ENCODE measurements at regions of chr5 and their contacts with region 1.

Region 1: DNA sequence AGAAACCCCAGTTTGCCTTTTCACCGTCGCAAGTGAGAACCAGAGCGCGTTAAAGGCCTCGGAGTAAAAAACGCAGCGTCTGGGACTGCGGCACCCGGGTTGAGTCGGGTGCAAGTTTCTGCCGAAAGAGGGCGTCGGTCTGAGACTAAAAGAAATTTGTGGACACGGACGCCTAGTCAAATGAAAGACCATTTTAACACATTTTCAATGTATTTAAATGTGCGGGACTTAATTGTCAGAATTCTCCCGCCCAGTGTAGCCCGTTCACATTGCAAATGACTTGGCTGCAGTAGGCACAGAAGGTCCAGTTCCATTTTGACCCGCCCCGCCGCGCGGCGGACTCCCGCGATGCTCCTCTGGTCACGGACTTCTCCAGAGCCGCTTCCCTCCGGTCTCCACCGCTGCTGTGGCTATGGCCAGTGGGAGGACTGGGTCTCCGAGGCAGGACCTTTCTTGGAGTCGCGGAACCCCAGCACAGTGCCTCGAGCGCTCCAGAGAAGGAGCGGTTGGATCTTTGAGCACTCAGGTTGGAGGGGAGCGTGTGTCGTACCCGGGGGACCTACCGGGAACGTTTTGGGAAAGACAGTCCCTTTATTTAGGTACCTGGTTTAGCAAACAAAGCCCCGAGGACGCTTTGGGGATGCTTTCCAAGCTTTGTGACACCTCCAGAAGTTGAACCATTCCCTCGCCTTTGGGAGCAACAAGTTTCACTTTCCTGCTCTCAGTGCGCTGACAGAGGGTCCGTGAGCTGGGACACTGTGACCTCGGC is 1.2 kb upstream of the NPR3 start:
- DNase-seq: peak; percentile 69
- H3K4me3 ChIP-seq: peak overlapping the region; percentile 41 to 72 (median 53)
- H3K27ac ChIP-seq: peak overlapping the region; percentile 64 to 79 (median 74)
- H3K4me1 ChIP-seq: peaks cover 0 to 44% (median 18%) of the 10 kb centered on the region in 4 donors
- H3K27me3 ChIP-seq: peaks cover 70% of the 10 kb centered on the region
- CTCF ChIP-seq: peak; percentile 57 to 63 (median 58)
- EP300 ChIP-seq: no peak
- POLR2A ChIP-seq: no peak

Region 2: DNA sequence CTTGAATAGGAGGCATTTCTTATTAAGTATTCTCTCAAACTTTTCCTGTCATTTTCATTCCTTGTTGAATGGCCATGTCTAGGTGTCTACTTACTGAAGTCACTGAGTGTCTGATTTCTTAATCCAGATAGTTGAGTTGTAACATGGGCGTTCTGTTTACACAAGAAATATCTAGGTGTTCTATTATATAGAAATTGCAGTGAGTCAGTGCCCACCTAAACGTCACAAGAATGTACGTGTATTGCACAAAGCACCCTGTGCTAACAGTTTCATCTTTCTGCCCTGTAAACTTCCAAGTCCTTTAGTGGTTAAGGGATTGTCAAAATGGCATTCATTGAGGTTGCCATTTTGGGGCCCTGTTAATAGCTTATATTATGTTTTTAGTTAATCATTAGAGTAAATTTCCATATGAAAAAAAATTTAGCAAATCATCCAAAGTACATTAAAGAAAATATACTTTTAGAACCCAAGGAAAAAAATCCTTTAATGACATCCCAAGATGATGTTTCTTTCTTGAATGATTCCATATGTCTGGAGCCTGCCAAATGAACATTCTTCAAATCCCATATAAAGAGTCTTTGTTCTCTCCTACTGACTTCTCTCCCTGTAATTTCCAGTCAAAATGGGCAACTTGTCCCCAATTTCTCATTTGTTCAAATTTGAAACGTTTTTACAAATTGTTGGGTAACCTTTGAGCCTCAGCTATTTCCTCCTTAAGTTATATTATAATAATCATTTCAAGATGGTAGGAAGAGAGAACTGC is 650.0 kb before region 1 on chr5:
- in situ Hi-C with region 1: no loop called
- intact Hi-C with region 1: no loop called
- DNase-seq: no peak
- H3K4me3 ChIP-seq: no peak overlapping the region
- H3K27ac ChIP-seq: no peak overlapping the region
- H3K4me1 ChIP-seq: no peaks in the 10 kb centered on the region
- H3K27me3 ChIP-seq: no peaks in the 10 kb centered on the region
- CTCF ChIP-seq: no peak
- EP300 ChIP-seq: no peak
- POLR2A ChIP-seq: no peak

Region 3: DNA sequence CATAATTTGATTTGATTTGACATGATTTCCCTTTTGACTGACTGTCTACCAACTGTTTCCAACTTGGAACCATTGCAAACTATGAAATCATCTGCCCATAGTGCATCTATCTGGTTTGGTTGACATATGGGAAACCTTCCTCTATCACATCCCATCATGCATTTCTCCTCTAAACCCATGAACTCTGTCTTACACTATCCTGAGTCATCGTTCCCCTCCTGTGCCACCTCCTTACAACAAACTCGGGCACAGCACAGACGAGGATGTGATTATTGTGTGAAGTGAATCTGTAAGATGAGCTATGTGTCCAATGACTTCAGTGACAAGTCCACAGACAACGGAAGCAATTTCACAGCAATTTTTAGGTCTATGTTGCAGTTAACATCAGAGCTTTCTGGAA is 127.2 kb after region 1 on chr5:
- in situ Hi-C with region 1: no loop called
- intact Hi-C with region 1: no loop called
- DNase-seq: no peak
- H3K4me3 ChIP-seq: no peak overlapping the region
- H3K27ac ChIP-seq: no peak overlapping the region
- H3K4me1 ChIP-seq: no peaks in the 10 kb centered on the region
- H3K27me3 ChIP-seq: no peaks in the 10 kb centered on the region
- CTCF ChIP-seq: no peak
- EP300 ChIP-seq: no peak
- POLR2A ChIP-seq: no peak

Region 4: DNA sequence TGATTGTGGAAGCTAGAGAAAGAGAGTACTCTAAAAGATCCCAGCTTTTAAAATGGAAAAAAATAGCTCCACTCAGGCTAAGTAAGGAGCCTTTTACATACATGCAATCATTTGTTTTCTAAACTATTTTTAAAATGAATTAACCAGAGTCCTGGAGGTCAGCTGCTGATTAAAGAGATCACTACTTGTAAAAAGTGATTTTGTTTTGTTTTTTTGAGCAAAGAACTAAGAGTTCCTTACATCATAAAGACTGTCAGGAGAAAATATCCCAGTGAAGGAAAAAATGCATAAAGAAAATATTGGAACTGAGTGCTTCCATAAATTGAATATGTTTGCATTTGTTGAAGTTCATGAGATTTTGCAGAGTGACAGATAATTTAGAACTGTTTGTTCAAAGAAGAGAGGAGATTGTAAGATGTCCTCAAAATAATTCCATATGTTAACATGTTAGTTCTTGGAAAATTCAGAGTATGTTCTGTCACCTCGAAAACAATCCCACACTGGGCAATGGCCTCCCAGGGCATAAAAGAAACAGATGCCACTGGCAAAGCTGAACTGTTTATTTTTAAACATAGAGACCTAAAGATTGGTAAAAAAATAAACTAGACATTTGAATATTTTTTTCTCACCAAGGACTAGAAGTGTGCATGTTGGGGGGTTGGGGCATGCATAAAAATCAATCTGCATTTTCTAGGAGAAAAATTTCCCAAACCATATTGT is 265.9 kb after region 1 on chr5:
- in situ Hi-C with region 1: no loop called
- intact Hi-C with region 1: no loop called
- DNase-seq: no peak
- H3K4me3 ChIP-seq: no peak overlapping the region
- H3K27ac ChIP-seq: peak overlapping the region in 2 of 4 donors; percentile 1 to 41
- H3K4me1 ChIP-seq: no peaks in the 10 kb centered on the region
- H3K27me3 ChIP-seq: no peaks in the 10 kb centered on the region
- CTCF ChIP-seq: no peak
- EP300 ChIP-seq: no peak
- POLR2A ChIP-seq: no peak

Region 5: GRCh38 chr5:33281431-33281843 is 571.5 kb after region 1 on chr5:
- in situ Hi-C with region 1: no loop called
- intact Hi-C with region 1: loop called (anchors 10 kb)
- DNase-seq: no peak
- H3K4me3 ChIP-seq: no peak overlapping the region
- H3K27ac ChIP-seq: no peak overlapping the region
- H3K4me1 ChIP-seq: peaks cover 0 to 11% (median 0%) of the 10 kb centered on the region in 4 donors
- H3K27me3 ChIP-seq: no peaks in the 10 kb centered on the region
- CTCF ChIP-seq: no peak
- EP300 ChIP-seq: no peak
- POLR2A ChIP-seq: no peak

Region 6: DNA sequence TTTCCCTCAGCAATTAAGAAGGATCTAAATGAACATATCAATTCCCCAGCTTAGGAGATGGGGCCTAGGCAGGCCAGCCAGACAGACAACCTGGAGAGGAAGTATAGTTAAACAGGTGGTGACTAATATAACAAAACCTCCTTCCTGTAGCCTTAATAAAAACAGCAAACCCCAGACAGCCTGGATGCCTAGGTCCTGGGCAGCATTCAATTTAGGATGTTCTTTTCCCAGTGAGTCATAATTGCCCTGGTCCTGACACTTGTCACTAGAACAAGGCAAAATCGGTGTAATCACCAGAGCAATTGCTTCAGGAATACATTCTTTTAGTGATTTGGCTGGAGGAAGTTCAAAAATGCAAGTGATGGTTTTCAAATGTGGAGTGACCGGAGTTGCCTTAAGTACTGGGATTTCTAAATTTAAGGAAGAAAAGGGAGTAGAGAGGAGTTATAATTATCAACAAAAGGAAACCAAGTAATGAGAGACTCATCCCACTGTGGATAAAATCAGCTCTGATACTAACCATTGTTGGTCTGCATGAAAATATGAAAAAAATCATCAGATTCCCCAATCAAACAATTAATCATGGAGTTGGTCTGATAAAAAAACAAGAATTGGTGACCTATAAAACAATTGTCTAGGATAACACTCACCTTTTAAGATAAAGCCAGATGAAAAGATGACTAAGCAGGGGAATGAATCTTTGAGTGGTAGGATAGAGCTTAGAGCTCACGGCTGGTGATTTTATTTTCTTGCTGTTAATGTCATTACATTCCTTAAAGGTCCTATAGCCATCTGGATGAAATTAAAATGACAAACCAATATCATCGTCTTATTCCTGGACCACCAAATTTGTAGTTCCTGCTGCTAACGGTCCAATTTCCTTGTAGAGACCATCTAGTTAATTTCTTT is 691.8 kb after region 1 on chr5:
- in situ Hi-C with region 1: loop called in 3 of 4 experiments (anchors 25 kb)
- intact Hi-C with region 1: loop called (anchors 10 kb)
- DNase-seq: no peak
- H3K4me3 ChIP-seq: no peak overlapping the region
- H3K27ac ChIP-seq: no peak overlapping the region
- H3K4me1 ChIP-seq: no peaks in the 10 kb centered on the region
- H3K27me3 ChIP-seq: no peaks in the 10 kb centered on the region
- CTCF ChIP-seq: no peak
- EP300 ChIP-seq: no peak
- POLR2A ChIP-seq: no peak

Region 7: DNA sequence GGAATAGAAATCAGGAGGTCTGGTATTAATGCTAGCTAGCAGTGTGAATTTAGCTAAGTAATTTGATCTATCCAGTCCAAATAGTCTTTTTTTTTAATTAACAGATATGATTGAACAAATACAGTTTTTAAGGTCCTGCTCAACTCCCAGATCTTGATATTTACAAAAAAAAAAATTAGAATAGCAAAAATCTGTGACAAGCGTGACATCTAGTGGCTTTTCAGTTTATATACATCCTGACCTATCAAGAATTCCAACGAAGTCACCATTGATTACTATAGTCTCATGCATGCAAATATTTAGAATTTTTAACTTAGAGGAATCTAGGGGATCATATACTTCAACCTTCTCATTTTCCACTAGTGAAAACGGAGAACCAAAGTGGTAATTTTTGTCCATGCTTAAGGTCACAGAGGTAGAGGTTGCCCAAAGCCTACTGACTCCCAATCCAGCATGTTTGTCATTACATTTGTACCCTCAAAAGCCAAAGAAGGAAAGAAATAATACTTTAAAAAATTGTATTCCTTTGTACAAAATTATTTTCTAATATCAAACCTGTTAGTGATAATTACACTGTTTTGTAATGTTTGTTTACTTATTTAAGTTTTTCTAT is 713.2 kb after region 1 on chr5:
- in situ Hi-C with region 1: loop called in 3 of 4 experiments (anchors 25 kb)
- intact Hi-C with region 1: no loop called
- DNase-seq: no peak
- H3K4me3 ChIP-seq: no peak overlapping the region
- H3K27ac ChIP-seq: no peak overlapping the region
- H3K4me1 ChIP-seq: no peaks in the 10 kb centered on the region
- H3K27me3 ChIP-seq: no peaks in the 10 kb centered on the region
- CTCF ChIP-seq: peak; percentile 32 to 51 (median 35)
- EP300 ChIP-seq: no peak
- POLR2A ChIP-seq: no peak

Measured in transverse colon (tissue), 4 donors.